ENCODE measurements at regions of chr17 and their contacts with region 1.

Region 1: DNA sequence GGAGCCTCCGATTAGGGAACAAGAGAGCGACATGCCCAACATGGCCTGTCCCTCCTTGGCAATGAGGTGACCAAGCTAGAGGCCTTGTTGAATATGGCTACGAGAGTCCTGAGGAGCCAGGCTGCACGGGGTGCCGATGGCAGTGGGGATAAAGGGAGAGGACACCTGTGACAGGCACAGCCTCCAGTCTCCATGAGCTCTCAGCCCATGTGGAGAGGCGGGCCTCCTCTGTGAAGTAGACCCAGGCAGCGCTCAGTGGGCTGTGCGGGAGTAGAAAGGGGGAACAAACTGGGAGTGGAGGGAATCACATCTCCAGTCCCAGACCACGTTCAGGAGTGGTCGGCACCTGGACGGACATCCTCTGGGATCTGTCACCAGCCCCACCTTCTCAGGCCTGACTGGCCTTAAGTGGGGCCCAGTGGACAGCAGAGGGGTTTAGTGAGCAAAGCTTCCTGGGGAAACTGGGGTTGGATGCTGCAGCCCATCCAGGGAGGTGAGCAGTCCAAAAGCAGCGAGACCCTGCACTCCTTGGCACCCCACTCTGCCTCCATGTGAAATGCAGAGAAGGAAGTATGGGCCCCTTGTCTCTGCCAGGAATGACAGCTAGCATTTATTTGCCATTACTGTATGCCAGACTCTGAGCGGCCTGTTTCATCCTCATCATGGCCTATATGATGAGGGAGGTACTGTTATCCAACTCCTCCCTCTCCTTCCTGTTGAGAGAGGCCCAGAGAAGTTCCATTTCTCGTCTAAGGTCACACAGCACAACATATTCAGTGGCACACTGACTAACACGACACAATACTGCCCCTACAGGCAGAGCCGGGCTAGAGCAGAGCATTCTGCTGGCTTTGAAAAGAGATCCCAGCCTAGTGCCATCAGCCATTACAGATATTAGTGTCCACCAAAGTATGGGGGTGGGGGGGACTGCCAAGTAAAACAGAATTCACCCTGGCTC is 4.5 kb upstream of the TMEM92 start:
- DNase-seq: peak; percentile 41
- H3K4me3 ChIP-seq: no peak overlapping the region
- H3K27ac ChIP-seq: no peak overlapping the region
- H3K4me1 ChIP-seq: peaks cover 24% of the 10 kb centered on the region
- H3K27me3 ChIP-seq: no peaks in the 10 kb centered on the region
- CTCF ChIP-seq: peak; percentile 82 to 99

Region 2: GRCh38 chr17:50209472-50210239 is 60.1 kb before region 1 on chr17:
- CTCF ChIA-PET with region 1: no interaction called
- dilution Hi-C with region 1: loop called (anchors 5 kb)
- in situ Hi-C with region 1: loop called in 1 of 2 experiments (anchors 5 kb)
- intact Hi-C with region 1: no loop called
- DNase-seq: no peak
- H3K4me3 ChIP-seq: no peak overlapping the region
- H3K27ac ChIP-seq: no peak overlapping the region
- H3K4me1 ChIP-seq: peaks cover 18% of the 10 kb centered on the region
- H3K27me3 ChIP-seq: no peaks in the 10 kb centered on the region
- CTCF ChIP-seq: no peak

Region 3: DNA sequence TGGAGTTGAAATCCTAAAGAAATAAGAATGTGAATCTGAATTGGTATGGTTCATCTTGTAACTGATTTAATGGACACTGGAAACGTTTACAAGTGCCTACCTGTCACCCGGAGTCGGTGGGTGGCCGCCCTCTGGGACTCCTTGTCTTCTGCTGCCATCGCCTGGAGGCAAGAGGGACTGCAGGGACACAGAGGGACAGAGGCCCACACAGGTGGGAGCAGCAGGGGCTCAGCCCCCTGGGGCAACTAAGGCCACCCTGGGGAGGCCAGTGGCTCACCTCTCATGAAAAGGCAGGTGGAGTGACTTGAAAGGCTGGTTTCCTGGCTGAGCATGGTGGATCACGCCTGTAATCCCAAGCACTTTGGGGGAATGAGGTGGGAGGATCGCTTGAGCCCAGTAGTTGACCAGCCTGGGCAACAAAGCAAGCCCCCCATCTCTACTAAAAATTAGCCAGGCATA is 27.7 kb after region 1 on chr17:
- CTCF ChIA-PET with region 1: no interaction called
- dilution Hi-C with region 1: no loop called
- in situ Hi-C with region 1: no loop called
- intact Hi-C with region 1: loop called (anchors 1 kb)
- DNase-seq: no peak
- H3K4me3 ChIP-seq: no peak overlapping the region
- H3K27ac ChIP-seq: no peak overlapping the region
- H3K4me1 ChIP-seq: no peaks in the 10 kb centered on the region
- H3K27me3 ChIP-seq: no peaks in the 10 kb centered on the region
- CTCF ChIP-seq: peak; percentile 82 to 93

Region 4: DNA sequence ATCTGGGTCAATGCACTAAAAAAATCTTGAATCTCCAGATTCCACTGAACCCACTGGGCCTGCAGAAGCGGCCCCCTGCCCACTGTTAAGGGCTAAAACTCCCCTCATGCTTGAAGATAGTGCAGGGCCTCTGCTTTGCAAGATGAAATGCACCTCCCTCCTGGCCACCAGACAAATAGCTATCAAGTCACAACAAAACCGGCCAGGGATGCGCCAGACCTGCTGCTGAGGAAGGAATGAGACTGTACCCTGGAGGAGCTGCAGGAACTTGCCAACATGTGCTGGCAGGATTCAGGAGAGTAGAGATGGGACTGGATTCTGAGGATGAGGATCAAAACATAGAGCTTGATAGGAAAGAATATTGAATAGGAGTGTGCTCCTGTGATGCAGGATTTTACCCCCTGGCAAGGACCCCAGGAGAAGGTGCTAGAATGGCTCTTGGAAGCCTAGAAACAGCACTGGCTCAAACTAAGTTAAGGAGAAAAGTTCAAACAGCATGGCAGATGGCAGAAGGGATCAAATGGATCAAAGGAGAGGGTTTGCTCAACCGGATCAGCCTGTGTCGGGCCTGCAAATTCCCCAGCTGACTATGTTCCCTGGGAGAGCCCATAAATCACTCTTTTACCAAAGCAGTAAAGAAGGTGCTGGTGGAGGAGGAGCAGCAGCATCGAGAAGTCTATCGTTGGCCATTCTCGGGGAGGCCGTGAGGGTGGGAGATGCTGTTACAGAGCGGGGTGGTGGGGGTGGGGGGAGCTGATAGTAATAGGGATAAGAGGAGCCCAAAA is 48.9 kb after region 1 on chr17:
- CTCF ChIA-PET with region 1: no interaction called
- dilution Hi-C with region 1: loop called (anchors 5 kb)
- in situ Hi-C with region 1: no loop called
- intact Hi-C with region 1: no loop called
- DNase-seq: peak; percentile 73
- H3K4me3 ChIP-seq: no peak overlapping the region
- H3K27ac ChIP-seq: no peak overlapping the region
- H3K4me1 ChIP-seq: peaks cover 33% of the 10 kb centered on the region
- H3K27me3 ChIP-seq: no peaks in the 10 kb centered on the region
- CTCF ChIP-seq: peak in 1 of 2 donors; percentile 57

Region 5: DNA sequence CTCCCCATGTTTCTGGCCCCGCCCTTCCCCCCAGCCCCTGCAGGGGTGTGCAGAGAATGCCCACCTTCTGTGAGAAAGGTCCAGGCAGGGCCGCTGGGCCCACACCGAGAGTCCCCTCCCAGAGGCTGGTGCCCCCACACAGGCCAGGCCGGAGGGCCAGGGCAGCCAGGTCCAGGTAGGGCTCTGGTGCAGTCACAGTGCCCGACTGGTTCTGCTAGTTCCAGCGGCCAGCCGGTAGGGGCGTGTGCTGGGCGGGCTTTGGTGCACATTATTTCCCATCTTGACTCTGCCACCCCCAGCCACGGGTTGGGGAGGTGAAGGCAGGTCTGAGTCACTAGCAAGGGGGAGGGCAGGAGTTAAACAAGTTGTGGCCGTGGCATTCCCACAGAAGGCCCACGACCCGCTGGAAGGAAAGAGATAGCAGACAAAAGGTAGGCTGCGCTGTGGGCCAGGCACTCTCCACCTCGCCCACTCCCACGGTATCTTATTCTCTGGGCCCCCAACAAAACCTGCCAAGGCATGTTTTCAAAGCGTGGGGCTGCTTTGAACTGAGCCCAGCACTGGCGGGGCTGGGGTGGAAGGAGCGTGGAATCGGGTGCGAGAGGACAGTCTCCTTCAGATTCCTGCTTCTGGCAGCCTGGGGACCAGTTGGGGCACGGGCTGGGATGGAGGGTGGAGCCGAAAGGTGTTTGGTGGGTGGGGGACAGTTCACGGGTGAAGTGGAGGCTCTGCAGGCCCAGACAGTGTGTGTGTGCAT is 264.6 kb after region 1 on chr17:
- CTCF ChIA-PET with region 1: interaction called, 13 read pairs
- dilution Hi-C with region 1: no loop called
- in situ Hi-C with region 1: no loop called
- intact Hi-C with region 1: no loop called
- DNase-seq: peak; percentile 86
- H3K4me3 ChIP-seq: peak overlapping the region; percentile 51 to 87 (median 64)
- H3K27ac ChIP-seq: peak overlapping the region; percentile 36
- H3K4me1 ChIP-seq: peaks cover 56% of the 10 kb centered on the region
- H3K27me3 ChIP-seq: no peaks in the 10 kb centered on the region
- CTCF ChIP-seq: peak; percentile 52 to 74